Right cardiac atrium (tissue), 5 donors: ENCODE measurements at regions of chr18 and their contacts with region 1.

Region 1: DNA sequence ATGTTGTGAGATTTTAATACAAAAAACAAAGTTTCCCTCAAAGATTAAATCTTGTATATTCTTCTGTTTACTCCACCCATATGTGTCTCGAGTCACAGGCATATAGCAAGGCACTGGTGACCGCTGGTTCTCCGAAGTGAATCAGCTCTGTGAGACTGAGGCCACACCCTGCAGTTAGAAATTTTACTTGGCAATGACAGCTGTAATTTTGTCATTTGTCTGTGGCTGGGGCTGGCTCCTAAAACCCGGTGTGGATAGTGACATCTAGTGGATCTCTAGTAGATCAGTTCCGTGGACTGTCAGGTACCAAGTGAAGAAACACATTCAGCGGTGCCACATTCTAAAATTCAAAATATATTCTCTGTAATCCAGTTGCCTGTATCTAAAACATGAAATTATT is 278.0 kb downstream of the NEDD4L start:
- DNase-seq: peak; percentile 66 to 83 (median 68)
- ATAC-seq: peak; percentile 96 to 97
- H3K4me3 ChIP-seq: no peak overlapping the region
- H3K27ac ChIP-seq: no peak overlapping the region
- H3K4me1 ChIP-seq: no peaks in the 10 kb centered on the region
- H3K27me3 ChIP-seq: no peaks in the 10 kb centered on the region

Region 2: GRCh38 chr18:58043491-58044379 is 278.3 kb before region 1 on chr18 and contains the start of gene NEDD4L:
- intact Hi-C with region 1: loop called in 1 of 4 experiments (anchors 10 kb)
- DNase-seq: peak; percentile 85 to 93 (median 93)
- ATAC-seq: peak; percentile 92 to 94
- H3K4me3 ChIP-seq: peak within 1 kb of the TSS; percentile 92
- H3K27ac ChIP-seq: peak within 1 kb of the TSS; percentile 70
- H3K4me1 ChIP-seq: no peaks in the 10 kb centered on the region
- H3K27me3 ChIP-seq: no peaks in the 10 kb centered on the region
- total RNA-seq, gene NEDD4L: 72.6 to 87.5 (median 76.0) TPM

Region 3: GRCh38 chr18:58186258-58186948 is 135.6 kb before region 1 on chr18:
- intact Hi-C with region 1: loop called in 3 of 4 experiments (anchors 5 to 10 kb)
- DNase-seq: no peak
- ATAC-seq: no peak
- H3K4me3 ChIP-seq: no peak overlapping the region
- H3K27ac ChIP-seq: no peak overlapping the region
- H3K4me1 ChIP-seq: no peaks in the 10 kb centered on the region
- H3K27me3 ChIP-seq: no peaks in the 10 kb centered on the region

Region 4: GRCh38 chr18:58195278-58195765 is 126.7 kb before region 1 on chr18:
- intact Hi-C with region 1: loop called in 3 of 4 experiments (anchors 5 to 10 kb)
- DNase-seq: peak in 2 of 3 donors; percentile 59 to 66
- ATAC-seq: peak; percentile 49 to 55
- H3K4me3 ChIP-seq: peak overlapping the region; percentile 26
- H3K27ac ChIP-seq: no peak overlapping the region
- H3K4me1 ChIP-seq: peaks cover 5% of the 10 kb centered on the region
- H3K27me3 ChIP-seq: no peaks in the 10 kb centered on the region

Region 5: DNA sequence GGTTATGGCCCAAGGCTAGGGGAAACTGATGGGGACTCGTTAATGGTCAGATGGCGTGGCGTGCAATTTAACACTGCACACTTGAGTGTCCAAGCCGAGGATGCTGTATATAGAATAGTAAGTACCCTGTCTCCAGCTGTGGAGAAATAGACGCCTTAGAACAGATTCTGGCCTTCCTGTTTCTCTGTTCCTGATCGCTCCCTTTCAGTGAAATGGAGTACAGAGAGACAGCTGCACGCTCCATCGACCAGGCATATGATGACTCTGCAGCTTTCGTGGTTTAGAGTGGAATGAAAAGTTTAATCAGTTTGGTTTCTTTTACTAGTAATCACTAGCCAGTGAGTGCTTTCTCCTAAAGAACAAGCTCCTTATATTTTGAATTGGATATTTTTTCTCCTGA is 64.5 kb before region 1 on chr18:
- intact Hi-C with region 1: loop called in 2 of 4 experiments (anchors 5 to 10 kb)
- DNase-seq: no peak
- ATAC-seq: no peak
- H3K4me3 ChIP-seq: peak overlapping the region; percentile 66
- H3K27ac ChIP-seq: peak overlapping the region; percentile 84
- H3K4me1 ChIP-seq: no peaks in the 10 kb centered on the region
- H3K27me3 ChIP-seq: no peaks in the 10 kb centered on the region

Region 6: GRCh38 chr18:58378411-58379379 is 56.7 kb after region 1 on chr18:
- intact Hi-C with region 1: no loop called
- DNase-seq: no peak
- ATAC-seq: peak; percentile 18 to 47
- H3K4me3 ChIP-seq: no peak overlapping the region
- H3K27ac ChIP-seq: no peak overlapping the region
- H3K4me1 ChIP-seq: no peaks in the 10 kb centered on the region
- H3K27me3 ChIP-seq: no peaks in the 10 kb centered on the region